Breast epithelium (tissue), 4 donors: ENCODE measurements at regions of chr11 and their contacts with region 1.

Region 1: GRCh38 chr11:18209058-18209457 is 27.5 kb downstream of the SAA4 start:
- DNase-seq: no peak
- H3K4me3 ChIP-seq: no peak overlapping the region
- H3K27ac ChIP-seq: no peak overlapping the region
- H3K4me1 ChIP-seq: no peaks in the 10 kb centered on the region
- H3K27me3 ChIP-seq: peaks cover 0 to 8% of the 10 kb centered on the region in 2 donors
- CTCF ChIP-seq: no peak
- POLR2A ChIP-seq: no peak

Region 2: GRCh38 chr11:18907391-18907790 is 698.3 kb after region 1 on chr11:
- intact Hi-C with region 1: loop called (anchors 5 kb)
- DNase-seq: no peak
- H3K4me3 ChIP-seq: no peak overlapping the region
- H3K27ac ChIP-seq: no peak overlapping the region
- H3K4me1 ChIP-seq: no peaks in the 10 kb centered on the region
- H3K27me3 ChIP-seq: no peaks in the 10 kb centered on the region
- CTCF ChIP-seq: no peak
- POLR2A ChIP-seq: no peak